Endothelial cell of umbilical vein (primary cell): ENCODE measurements at regions of chr11 and their contacts with region 1.

Region 1: GRCh38 chr11:46537537-46538295 is 56.1 kb downstream of the AMBRA1 start:
- DNase-seq: peak; percentile 75
- H3K4me3 ChIP-seq: no peak overlapping the region
- H3K27ac ChIP-seq: no peak overlapping the region
- H3K4me1 ChIP-seq: no peaks in the 10 kb centered on the region
- H3K27me3 ChIP-seq: no peaks in the 10 kb centered on the region
- CTCF ChIP-seq: peak; percentile 88 to 91
- POLR2A ChIP-seq: no peak

Region 2: GRCh38 chr11:46200537-46201281 is 337.0 kb before region 1 on chr11:
- CTCF ChIA-PET with region 1: no interaction called
- POLR2A ChIA-PET with region 1: no interaction called
- dilution Hi-C with region 1: no loop called
- intact Hi-C with region 1: no loop called
- DNase-seq: no peak
- H3K4me3 ChIP-seq: no peak overlapping the region
- H3K27ac ChIP-seq: no peak overlapping the region
- H3K4me1 ChIP-seq: no peaks in the 10 kb centered on the region
- H3K27me3 ChIP-seq: peaks cover 12 to 13% of the 10 kb centered on the region in 2 experiments
- CTCF ChIP-seq: no peak
- POLR2A ChIP-seq: no peak

Region 3: DNA sequence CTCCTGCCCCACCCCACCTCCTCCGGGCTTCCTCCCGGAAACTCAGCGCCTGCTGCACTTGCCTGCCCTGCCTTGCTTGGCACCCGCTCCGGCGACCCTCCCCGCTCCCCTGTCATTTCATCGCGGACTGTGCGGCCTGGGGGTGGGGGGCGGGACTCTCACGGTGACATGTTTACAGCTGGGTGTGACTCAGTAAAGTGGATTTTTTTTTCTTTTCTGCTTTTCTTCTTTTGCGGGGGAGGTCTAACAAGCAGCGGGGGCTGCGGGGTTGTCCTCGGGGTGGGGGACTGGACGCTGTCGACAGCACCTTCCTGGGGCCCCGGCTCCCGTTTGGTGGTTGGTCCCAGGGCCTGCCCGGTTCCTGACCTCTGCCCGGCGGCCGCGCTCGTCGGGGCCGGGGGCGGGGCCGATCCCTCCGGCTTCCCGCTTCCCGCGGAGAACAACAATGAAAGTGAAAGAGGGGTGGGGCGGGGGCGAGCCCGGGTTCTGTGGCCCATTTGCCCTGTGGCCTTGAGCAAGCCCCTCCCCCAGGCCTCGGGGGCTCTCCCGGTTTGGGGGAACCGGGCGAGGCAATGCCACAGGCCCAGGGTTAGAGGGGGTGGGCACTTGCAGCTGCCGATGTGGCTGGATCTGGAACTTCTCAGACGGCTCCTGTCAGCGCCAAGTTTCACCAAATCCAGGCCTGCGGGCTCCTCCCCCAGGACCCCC is 157.2 kb before region 1 on chr11:
- CTCF ChIA-PET with region 1: interaction called, 11 read pairs
- POLR2A ChIA-PET with region 1: no interaction called
- dilution Hi-C with region 1: no loop called
- intact Hi-C with region 1: no loop called
- DNase-seq: peak; percentile 67
- H3K4me3 ChIP-seq: peak overlapping the region; percentile 62 to 84 (median 72)
- H3K27ac ChIP-seq: peak overlapping the region; percentile 61
- H3K4me1 ChIP-seq: peaks cover 11% of the 10 kb centered on the region
- H3K27me3 ChIP-seq: no peaks in the 10 kb centered on the region
- CTCF ChIP-seq: no peak
- POLR2A ChIP-seq: no peak

Region 4: GRCh38 chr11:46457659-46458424 is 79.9 kb before region 1 on chr11:
- CTCF ChIA-PET with region 1: no interaction called
- POLR2A ChIA-PET with region 1: no interaction called
- dilution Hi-C with region 1: no loop called
- intact Hi-C with region 1: no loop called
- DNase-seq: no peak
- H3K4me3 ChIP-seq: no peak overlapping the region
- H3K27ac ChIP-seq: no peak overlapping the region
- H3K4me1 ChIP-seq: peaks cover 6% of the 10 kb centered on the region
- H3K27me3 ChIP-seq: no peaks in the 10 kb centered on the region
- CTCF ChIP-seq: no peak
- POLR2A ChIP-seq: no peak

Region 5: DNA sequence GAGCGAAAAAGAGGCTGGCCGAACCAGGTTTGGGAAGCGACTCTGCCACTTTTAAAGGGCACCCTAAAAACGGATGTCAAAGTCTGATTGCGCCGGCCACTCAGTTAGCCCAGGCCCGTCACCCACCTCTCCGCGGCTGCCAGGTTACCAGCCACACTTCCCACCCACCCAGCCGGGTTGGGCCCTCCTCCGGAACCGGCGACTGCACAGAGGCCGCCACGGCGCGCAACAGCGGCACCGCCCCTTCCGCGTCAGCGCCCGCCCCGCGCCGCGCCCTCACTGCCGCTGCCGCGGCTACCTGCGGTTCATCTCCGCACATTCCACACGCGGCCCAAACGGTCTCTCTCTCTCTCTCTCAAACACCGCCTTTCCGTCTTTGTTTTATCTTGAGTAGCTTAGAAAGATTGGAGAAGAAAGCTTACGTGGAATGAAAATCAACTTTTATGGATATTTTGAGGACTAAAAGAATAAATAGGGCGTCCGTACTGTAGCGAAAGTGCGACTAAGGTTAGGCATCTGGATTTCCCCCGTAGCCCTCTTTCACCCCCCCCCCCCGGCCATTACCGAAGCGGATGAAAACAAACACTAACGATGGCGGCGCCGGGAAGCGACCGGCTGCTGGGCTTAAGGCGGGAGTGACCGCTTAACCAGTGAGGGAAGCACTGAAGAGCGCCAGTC is 79.4 kb after region 1 on chr11 and contains the starts of genes ATG13 and HARBI1:
- CTCF ChIA-PET with region 1: no interaction called
- POLR2A ChIA-PET with region 1: no interaction called
- dilution Hi-C with region 1: no loop called
- intact Hi-C with region 1: no loop called
- DNase-seq: peak; percentile 89
- H3K4me3 ChIP-seq: peak within 1 kb of the TSS; percentile 64 to 97 (median 86)
- H3K27ac ChIP-seq: peak within 1 kb of the TSS; percentile 96
- H3K4me1 ChIP-seq: peaks cover 19% of the 10 kb centered on the region
- H3K27me3 ChIP-seq: no peaks in the 10 kb centered on the region
- CTCF ChIP-seq: no peak
- POLR2A ChIP-seq: peak; percentile 93
- total RNA-seq, gene ATG13: 66.5 and 67.3 TPM in 2 replicates
- total RNA-seq, gene HARBI1: 3.2 and 4.7 TPM in 2 replicates